Activated CD4-positive, alpha-beta memory T cell treated with anti-CD3 and anti-CD28 coated beads for 36 hours (primary cell): ENCODE measurements at regions of chr10 and their contacts with region 1.

Region 1: GRCh38 chr10:80504158-80504811 is 33.4 kb upstream of the SH2D4B start:
- DNase-seq: no peak
- H3K4me3 Mint-ChIP-seq: no peak overlapping the region
- H3K27ac Mint-ChIP-seq: peak overlapping the region; percentile 93
- H3K4me1 Mint-ChIP-seq: peaks cover 63% of the 10 kb centered on the region
- H3K27me3 Mint-ChIP-seq: no peaks in the 10 kb centered on the region

Region 2: GRCh38 chr10:80382989-80383388 is 121.3 kb before region 1 on chr10:
- CTCF ChIA-PET with region 1: interaction called, 24 read pairs
- POLR2A ChIA-PET with region 1: no interaction called
- intact Hi-C with region 1: loop called (anchors 1 kb)
- DNase-seq: peak; percentile 54
- H3K4me3 Mint-ChIP-seq: no peak overlapping the region
- H3K27ac Mint-ChIP-seq: no peak overlapping the region
- H3K4me1 Mint-ChIP-seq: peaks cover 12% of the 10 kb centered on the region
- H3K27me3 Mint-ChIP-seq: peaks cover 5% of the 10 kb centered on the region

Region 3: DNA sequence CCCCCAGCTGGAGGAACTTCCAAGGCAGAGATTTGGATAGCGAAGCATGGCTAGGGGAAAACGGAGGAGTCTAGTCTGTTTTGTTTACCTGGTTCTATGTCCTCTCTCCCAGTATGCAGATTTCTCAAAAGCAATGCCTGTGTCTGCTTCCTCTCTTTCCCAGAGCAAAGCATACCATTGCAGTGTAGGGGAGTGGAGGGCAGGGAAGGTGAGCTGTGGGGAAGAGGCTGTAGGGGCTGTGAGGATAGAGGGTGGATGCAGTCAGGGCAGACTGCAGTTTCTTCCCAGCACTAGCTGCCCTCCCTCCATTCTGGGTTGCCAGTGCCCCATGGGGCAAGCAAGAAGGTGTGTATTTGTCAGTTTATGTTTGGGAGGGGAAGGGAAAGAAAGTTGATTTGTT is 67.1 kb before region 1 on chr10:
- CTCF ChIA-PET with region 1: interaction called, 1,168 read pairs
- POLR2A ChIA-PET with region 1: no interaction called
- intact Hi-C with region 1: no loop called
- DNase-seq: no peak
- H3K4me3 Mint-ChIP-seq: no peak overlapping the region
- H3K27ac Mint-ChIP-seq: no peak overlapping the region
- H3K4me1 Mint-ChIP-seq: no peaks in the 10 kb centered on the region
- H3K27me3 Mint-ChIP-seq: no peaks in the 10 kb centered on the region

Region 4: GRCh38 chr10:80487791-80488538 is 16.3 kb before region 1 on chr10:
- CTCF ChIA-PET with region 1: interaction called, 29 read pairs
- POLR2A ChIA-PET with region 1: interaction called, 36 read pairs
- intact Hi-C with region 1: no loop called
- DNase-seq: peak; percentile 80
- H3K4me3 Mint-ChIP-seq: peak overlapping the region; percentile 59
- H3K27ac Mint-ChIP-seq: peak overlapping the region; percentile 89
- H3K4me1 Mint-ChIP-seq: peaks cover 99% of the 10 kb centered on the region
- H3K27me3 Mint-ChIP-seq: no peaks in the 10 kb centered on the region

Region 5: DNA sequence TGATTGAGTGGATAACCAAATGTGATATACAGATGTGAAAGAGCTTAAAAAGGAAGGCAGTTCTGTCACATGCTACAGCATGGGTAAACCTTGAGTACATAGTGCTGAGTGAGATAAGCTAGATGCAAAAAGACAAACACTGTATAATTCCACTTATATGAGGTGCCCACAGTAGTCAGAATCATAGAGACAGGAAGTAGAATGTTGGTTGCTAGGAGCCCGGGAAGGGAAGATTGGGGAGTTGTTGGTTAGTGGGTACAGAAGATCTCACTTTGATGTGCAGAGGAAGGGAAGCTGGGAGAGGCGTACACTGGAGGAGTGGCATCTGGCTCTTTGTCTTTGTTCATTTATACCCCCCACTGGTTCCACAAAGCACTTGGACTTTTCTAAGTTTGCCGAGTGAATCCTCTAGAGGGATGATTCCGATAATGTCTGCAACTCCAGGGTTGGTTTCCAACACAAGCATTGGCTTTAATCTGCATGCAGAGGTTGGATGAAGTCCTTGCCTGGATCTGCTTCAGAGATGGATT is 10.7 kb before region 1 on chr10:
- CTCF ChIA-PET with region 1: interaction called, 29 read pairs
- POLR2A ChIA-PET with region 1: no interaction called
- intact Hi-C with region 1: no loop called
- DNase-seq: no peak
- H3K4me3 Mint-ChIP-seq: peak overlapping the region; percentile 18
- H3K27ac Mint-ChIP-seq: peak overlapping the region; percentile 88
- H3K4me1 Mint-ChIP-seq: peaks cover 99% of the 10 kb centered on the region
- H3K27me3 Mint-ChIP-seq: no peaks in the 10 kb centered on the region

Region 6: DNA sequence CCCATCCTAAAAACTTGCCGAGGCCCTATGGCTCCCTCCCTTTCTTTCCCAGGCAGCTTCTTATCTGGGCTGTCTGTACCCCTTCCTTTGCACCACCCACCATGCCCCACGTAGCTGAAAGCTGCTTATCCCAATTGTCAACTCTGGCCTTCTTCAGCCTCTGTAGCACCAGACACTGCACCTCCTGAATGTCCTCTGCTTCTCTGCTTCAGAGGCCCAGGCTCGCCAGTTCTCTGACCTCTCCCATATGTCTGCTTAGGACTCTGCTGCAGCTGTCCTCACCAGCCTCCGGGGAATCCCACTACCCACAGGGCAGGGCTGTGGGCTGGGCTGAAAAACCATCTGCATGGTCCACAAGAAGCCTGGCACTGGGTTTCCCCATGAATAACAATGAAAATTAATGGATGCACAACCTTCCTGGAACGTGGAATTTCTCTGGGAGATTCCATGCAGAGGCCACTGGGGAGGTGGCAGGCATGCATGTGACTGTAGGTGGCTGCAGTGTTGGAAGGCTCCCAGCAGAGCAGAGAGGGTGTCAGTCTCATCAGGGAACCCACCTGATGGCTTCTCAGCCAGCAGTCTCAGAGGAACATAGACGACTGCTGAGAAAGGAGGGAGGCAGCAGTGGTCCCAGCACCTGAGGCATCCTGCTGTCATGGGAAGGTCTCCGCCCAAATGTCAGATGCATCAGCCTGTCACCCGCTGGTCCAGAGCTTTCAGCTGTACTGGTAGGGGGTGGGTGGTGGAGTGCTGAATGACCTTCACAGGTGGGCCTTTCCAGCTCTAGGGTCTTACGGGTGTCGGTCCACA is 16.6 kb after region 1 on chr10:
- CTCF ChIA-PET with region 1: interaction called, 17 read pairs
- POLR2A ChIA-PET with region 1: no interaction called
- intact Hi-C with region 1: no loop called
- DNase-seq: no peak
- H3K4me3 Mint-ChIP-seq: no peak overlapping the region
- H3K27ac Mint-ChIP-seq: peak overlapping the region; percentile 25
- H3K4me1 Mint-ChIP-seq: peaks cover 40% of the 10 kb centered on the region
- H3K27me3 Mint-ChIP-seq: no peaks in the 10 kb centered on the region

Region 7: GRCh38 chr10:80530251-80530650 is 26.0 kb after region 1 on chr10:
- CTCF ChIA-PET with region 1: interaction called, 9 read pairs
- POLR2A ChIA-PET with region 1: no interaction called
- intact Hi-C with region 1: loop called (anchors 1 kb)
- DNase-seq: peak; percentile 80
- H3K4me3 Mint-ChIP-seq: no peak overlapping the region
- H3K27ac Mint-ChIP-seq: peak overlapping the region; percentile 74
- H3K4me1 Mint-ChIP-seq: peaks cover 66% of the 10 kb centered on the region
- H3K27me3 Mint-ChIP-seq: no peaks in the 10 kb centered on the region

Region 8: DNA sequence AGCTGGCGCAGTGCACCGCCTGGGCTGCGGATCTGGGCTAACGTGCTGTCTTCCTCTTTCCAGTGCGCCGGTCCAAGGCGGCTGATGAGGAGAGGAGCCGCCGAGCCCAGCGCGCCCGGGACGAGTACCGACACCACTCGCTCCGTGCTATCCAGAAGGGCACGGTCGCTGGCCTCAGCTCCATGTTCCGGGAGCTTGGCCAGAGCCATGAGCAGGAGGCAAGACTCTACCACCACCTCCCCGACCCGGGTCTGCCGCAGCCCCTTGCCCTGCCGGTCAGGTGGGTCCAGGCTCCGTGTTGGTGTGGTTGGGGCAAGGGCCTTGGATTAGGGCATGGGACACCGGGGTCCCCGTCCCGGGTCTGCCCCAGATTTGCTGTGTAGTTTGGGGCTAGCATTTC is 99.2 kb after region 1 on chr10:
- CTCF ChIA-PET with region 1: no interaction called
- POLR2A ChIA-PET with region 1: no interaction called
- intact Hi-C with region 1: no loop called
- DNase-seq: no peak
- H3K4me3 Mint-ChIP-seq: no peak overlapping the region
- H3K27ac Mint-ChIP-seq: no peak overlapping the region
- H3K4me1 Mint-ChIP-seq: no peaks in the 10 kb centered on the region
- H3K27me3 Mint-ChIP-seq: no peaks in the 10 kb centered on the region

Region 9: DNA sequence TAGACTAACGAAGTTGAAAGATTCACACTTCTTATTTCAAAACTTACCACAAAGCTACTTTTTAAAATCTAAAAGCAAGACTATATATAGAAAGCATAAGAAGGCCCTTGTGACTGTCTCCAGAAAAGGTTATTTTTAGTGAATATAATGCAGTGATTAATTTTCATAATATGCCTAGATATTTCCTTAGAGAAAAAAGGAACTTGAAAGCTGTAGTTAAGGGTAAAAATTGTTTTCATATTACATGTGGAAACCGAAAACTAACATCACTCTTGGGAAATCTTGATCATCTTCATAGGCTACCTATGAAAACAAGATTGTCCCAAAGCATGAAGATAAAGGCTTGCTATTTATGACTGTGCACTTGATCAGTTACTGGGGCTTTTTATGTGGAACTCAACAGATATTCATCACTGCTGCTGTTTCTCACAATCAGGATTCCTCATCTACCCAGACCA is 256.7 kb after region 1 on chr10:
- CTCF ChIA-PET with region 1: no interaction called
- POLR2A ChIA-PET with region 1: no interaction called
- intact Hi-C with region 1: no loop called
- DNase-seq: no peak
- H3K4me3 Mint-ChIP-seq: no peak overlapping the region
- H3K27ac Mint-ChIP-seq: no peak overlapping the region
- H3K4me1 Mint-ChIP-seq: no peaks in the 10 kb centered on the region
- H3K27me3 Mint-ChIP-seq: peaks cover 2% of the 10 kb centered on the region